Activated CD4-positive, alpha-beta memory T cell treated with anti-CD3 and anti-CD28 coated beads for 36 hours (primary cell): ENCODE measurements at regions of chr21 and their contacts with region 1.

Region 1: DNA sequence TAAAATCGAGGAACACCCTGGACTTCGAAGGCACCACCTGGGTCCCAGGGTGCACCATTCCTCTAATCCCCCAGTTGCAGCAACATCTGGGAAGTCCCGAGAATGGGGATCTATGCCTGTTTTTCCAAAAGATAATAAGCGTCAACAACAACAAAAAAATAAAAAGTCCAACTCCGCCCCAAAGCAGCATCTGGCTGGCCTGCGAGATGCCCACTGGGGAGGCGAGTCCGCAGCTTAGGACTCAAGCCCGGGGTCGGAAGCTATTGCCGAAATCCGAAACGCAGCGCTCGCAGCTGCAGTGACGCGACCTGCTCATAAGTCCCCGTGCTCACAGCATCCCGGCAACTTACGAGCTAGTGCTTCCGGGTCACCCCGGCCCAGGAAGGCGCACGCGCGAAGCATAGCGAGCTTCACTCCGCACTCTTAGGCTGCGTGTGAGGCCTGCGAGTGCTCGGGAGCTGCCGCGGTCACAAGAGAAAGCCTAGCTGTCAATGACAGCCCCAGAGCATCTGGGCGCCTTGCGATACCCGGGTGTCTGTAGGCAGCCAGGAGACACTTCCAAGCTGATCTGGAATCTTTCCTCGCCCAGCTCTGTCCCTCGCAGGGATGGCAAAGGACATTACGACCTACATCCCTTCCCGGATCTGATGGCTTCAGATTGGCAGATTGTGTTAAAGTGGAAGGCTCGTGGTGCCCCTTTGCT is 9.9 kb upstream of the LTN1 start:
- DNase-seq: peak; percentile 97
- H3K4me3 Mint-ChIP-seq: peak overlapping the region; percentile 89
- H3K27ac Mint-ChIP-seq: peak overlapping the region; percentile 97
- H3K4me1 Mint-ChIP-seq: peaks cover 10% of the 10 kb centered on the region
- H3K27me3 Mint-ChIP-seq: no peaks in the 10 kb centered on the region

Region 2: GRCh38 chr21:29018540-29018939 is 15.9 kb after region 1 on chr21:
- CTCF ChIA-PET with region 1: interaction called, 11 read pairs
- POLR2A ChIA-PET with region 1: interaction called, 36 read pairs
- intact Hi-C with region 1: loop called (anchors 1 kb)
- DNase-seq: no peak
- H3K4me3 Mint-ChIP-seq: peak overlapping the region; percentile 86
- H3K27ac Mint-ChIP-seq: peak overlapping the region; percentile 93
- H3K4me1 Mint-ChIP-seq: peaks cover 29% of the 10 kb centered on the region
- H3K27me3 Mint-ChIP-seq: no peaks in the 10 kb centered on the region

Region 3: GRCh38 chr21:29024474-29025327 is 22.1 kb after region 1 on chr21 and contains the start of gene USP16:
- CTCF ChIA-PET with region 1: interaction called, 4 read pairs
- POLR2A ChIA-PET with region 1: interaction called, 36 read pairs
- intact Hi-C with region 1: loop called (anchors 1 kb)
- DNase-seq: peak; percentile 96
- H3K4me3 Mint-ChIP-seq: peak within 1 kb of the TSS; percentile 100
- H3K27ac Mint-ChIP-seq: peak within 1 kb of the TSS; percentile 100
- H3K4me1 Mint-ChIP-seq: peaks cover 50% of the 10 kb centered on the region
- H3K27me3 Mint-ChIP-seq: no peaks in the 10 kb centered on the region
- total RNA-seq, gene USP16: 39.3 to 42.1 TPM

Region 4: DNA sequence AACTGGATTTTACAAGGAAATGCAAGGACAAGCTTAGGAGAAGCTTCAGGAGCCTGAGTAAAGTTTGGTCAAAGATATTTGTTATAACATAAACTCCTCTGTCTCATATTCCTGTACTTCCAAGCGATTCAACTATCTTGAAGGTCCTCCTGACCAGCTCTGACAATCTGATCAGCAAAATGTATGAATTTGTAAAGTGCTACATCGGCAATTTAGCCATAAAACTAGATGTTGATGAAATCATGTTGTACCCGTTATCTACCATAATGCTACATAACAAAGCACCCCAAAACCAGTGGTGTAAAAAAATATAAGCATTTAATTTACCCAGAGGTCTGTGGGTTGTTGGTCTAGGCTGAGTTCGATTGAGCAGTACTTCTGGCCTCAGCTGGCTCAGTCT is 1898.3 kb after region 1 on chr21:
- CTCF ChIA-PET with region 1: no interaction called
- POLR2A ChIA-PET with region 1: no interaction called
- intact Hi-C with region 1: no loop called
- DNase-seq: no peak
- H3K4me3 Mint-ChIP-seq: no peak overlapping the region
- H3K27ac Mint-ChIP-seq: no peak overlapping the region
- H3K4me1 Mint-ChIP-seq: no peaks in the 10 kb centered on the region
- H3K27me3 Mint-ChIP-seq: peaks cover 12% of the 10 kb centered on the region